ENCODE measurements at regions of chr17 and their contacts with region 1.

Region 1: GRCh38 chr17:9575381-9576101 is at the start of gene STX8:
- DNase-seq: peak; percentile 81 to 93 (median 90)
- H3K4me3 ChIP-seq: peak within 1 kb of the TSS; percentile 61 to 98 (median 88)
- H3K27ac ChIP-seq: peak within 1 kb of the TSS in 36 of 59 donors; percentile 8 to 84 (median 55)
- H3K27me3 ChIP-seq: no peaks in the 10 kb centered on the region
- CTCF ChIP-seq: peak in 47 of 56 donors; percentile 2 to 53 (median 35)
- total RNA-seq, gene STX8: 42.0 to 101 (median 65.2) TPM

Region 2: DNA sequence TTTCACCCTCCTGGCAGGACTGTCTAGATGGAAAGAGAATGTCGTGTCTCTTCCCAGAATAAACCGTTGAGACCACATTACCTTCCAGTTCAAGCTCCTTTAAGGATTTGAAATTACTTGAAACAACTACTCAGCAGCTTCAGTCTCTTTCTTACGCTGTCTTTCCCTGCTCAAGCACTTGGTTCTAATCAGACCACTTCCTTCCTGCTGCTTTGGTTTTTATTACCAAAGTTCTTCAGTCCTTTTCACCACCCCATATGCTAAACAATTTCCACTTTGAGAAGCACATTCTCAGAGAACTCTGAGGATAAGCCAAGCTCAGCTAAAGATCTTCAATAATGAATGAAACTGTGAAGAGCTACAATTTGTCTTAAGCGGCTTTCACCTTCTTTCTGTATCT is 105.4 kb before region 1 on chr17:
- intact Hi-C with region 1: loop called in 1 of 2 experiments (anchors 10 kb)
- DNase-seq: no peak
- H3K4me3 ChIP-seq: no peak overlapping the region
- H3K27ac ChIP-seq: peak overlapping the region in 1 of 59 donors; percentile 16
- H3K27me3 ChIP-seq: no peaks in the 10 kb centered on the region
- CTCF ChIP-seq: no peak

Region 3: GRCh38 chr17:9729034-9729650 is 153.6 kb after region 1 on chr17:
- intact Hi-C with region 1: loop called in 1 of 2 experiments (anchors 5 kb)
- DNase-seq: peak in 2 of 10 donors; percentile 20 to 29
- H3K4me3 ChIP-seq: no peak overlapping the region
- H3K27ac ChIP-seq: peak overlapping the region in 7 of 59 donors; percentile 18 to 57 (median 35)
- H3K27me3 ChIP-seq: peaks cover 0 to 6% (median 0%) of the 10 kb centered on the region in 45 donors
- CTCF ChIP-seq: peak; percentile 63 to 98 (median 93)

Region 4: GRCh38 chr17:9802305-9803096 is 227.0 kb after region 1 on chr17:
- intact Hi-C with region 1: no loop called
- DNase-seq: no peak
- H3K4me3 ChIP-seq: no peak overlapping the region
- H3K27ac ChIP-seq: peak overlapping the region in 2 of 59 donors; percentile 4 to 19
- H3K27me3 ChIP-seq: peaks cover 0 to 24% (median 0%) of the 10 kb centered on the region in 45 donors
- CTCF ChIP-seq: no peak

Region 5: GRCh38 chr17:9850151-9850550 is 274.6 kb after region 1 on chr17:
- intact Hi-C with region 1: no loop called
- DNase-seq: no peak
- H3K4me3 ChIP-seq: no peak overlapping the region
- H3K27ac ChIP-seq: no peak overlapping the region
- H3K27me3 ChIP-seq: no peaks in the 10 kb centered on the region
- CTCF ChIP-seq: no peak

Measured in dorsolateral prefrontal cortex (tissue), 120 donors.